Endothelial cell of umbilical vein (primary cell): ENCODE measurements at regions of chr12 and their contacts with region 1.

Region 1: DNA sequence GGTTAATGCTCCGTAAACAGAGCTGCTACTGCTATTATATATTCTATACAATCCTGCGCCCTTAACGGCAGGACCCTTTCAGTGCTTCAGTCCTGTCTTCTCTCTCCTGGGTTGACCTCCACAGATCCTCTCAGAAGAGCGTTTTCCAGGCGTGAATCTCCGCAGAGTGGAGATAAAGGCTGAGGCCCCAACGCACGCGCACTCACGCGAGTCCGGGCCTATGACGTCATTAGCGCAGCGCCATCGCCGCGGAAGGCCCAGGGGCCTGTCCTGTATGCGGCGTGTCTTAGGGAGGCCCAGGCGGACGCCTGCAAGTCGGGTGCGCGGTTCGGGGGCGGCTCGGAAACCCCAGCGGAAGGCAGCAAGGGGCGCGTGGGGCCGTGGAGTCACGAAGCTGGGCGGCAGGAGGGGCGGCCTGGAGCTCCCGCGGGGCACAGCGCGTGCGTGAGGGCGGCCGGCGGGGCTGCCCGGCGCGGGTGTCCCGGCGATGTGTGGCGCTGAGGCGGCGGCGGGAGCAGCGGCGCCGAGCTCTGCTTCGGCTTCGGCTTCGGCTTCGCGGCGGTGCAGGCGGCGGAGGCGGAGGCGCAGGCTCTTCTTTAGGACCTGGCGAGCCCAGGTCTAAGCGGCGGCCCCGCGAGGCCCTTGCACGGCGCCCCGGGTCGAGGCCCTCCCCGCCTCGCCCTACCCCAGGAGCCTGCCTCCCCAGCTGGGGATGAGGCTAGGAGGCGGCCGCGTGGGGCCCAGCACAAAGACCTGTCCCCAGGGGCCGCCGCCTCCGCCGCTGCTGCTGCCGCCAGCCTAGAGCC is at the start of gene MAPKAPK5:
- DNase-seq: peak; percentile 97
- H3K4me3 ChIP-seq: peak within 1 kb of the TSS; percentile 57 to 97 (median 77)
- H3K27ac ChIP-seq: peak within 1 kb of the TSS; percentile 83
- H3K4me1 ChIP-seq: peaks cover 17% of the 10 kb centered on the region
- H3K27me3 ChIP-seq: no peaks in the 10 kb centered on the region
- CTCF ChIP-seq: no peak
- POLR2A ChIP-seq: peak; percentile 97
- total RNA-seq, gene MAPKAPK5: 46.4 and 47.1 TPM in 2 replicates

Region 2: GRCh38 chr12:112012775-112013600 is 171.0 kb after region 1 on chr12 and contains the starts of genes ERP29 and TMEM116:
- CTCF ChIA-PET with region 1: no interaction called
- POLR2A ChIA-PET with region 1: no interaction called
- dilution Hi-C with region 1: no loop called
- intact Hi-C with region 1: loop called (anchors 5 kb)
- DNase-seq: peak; percentile 100
- H3K4me3 ChIP-seq: peak within 1 kb of the TSS; percentile 72 to 81 (median 77)
- H3K27ac ChIP-seq: peak within 1 kb of the TSS; percentile 57
- H3K4me1 ChIP-seq: peaks cover 26% of the 10 kb centered on the region
- H3K27me3 ChIP-seq: no peaks in the 10 kb centered on the region
- CTCF ChIP-seq: peak; percentile 42 to 55
- POLR2A ChIP-seq: peak; percentile 99
- total RNA-seq, gene ERP29: 108 and 116 TPM in 2 replicates
- total RNA-seq, gene TMEM116: 1.6 TPM in 2 replicates

Region 3: GRCh38 chr12:112125250-112125999 is 283.5 kb after region 1 on chr12 and contains the start of gene TRAFD1:
- CTCF ChIA-PET with region 1: no interaction called
- POLR2A ChIA-PET with region 1: no interaction called
- dilution Hi-C with region 1: no loop called
- intact Hi-C with region 1: no loop called
- DNase-seq: peak; percentile 99
- H3K4me3 ChIP-seq: peak within 1 kb of the TSS; percentile 52 to 64 (median 61)
- H3K27ac ChIP-seq: peak within 1 kb of the TSS; percentile 44
- H3K4me1 ChIP-seq: peaks cover 14% of the 10 kb centered on the region
- H3K27me3 ChIP-seq: peaks cover 0 to 2% of the 10 kb centered on the region in 2 experiments
- CTCF ChIP-seq: no peak
- POLR2A ChIP-seq: peak; percentile 98
- total RNA-seq, gene TRAFD1: 22.4 and 24.9 TPM in 2 replicates

Region 4: GRCh38 chr12:112418608-112419298 is 576.8 kb after region 1 on chr12 and contains the start of gene PTPN11:
- CTCF ChIA-PET with region 1: no interaction called
- POLR2A ChIA-PET with region 1: no interaction called
- dilution Hi-C with region 1: no loop called
- intact Hi-C with region 1: loop called (anchors 10 kb)
- DNase-seq: peak; percentile 89
- H3K4me3 ChIP-seq: peak within 1 kb of the TSS; percentile 47 to 98 (median 78)
- H3K27ac ChIP-seq: peak within 1 kb of the TSS; percentile 91
- H3K4me1 ChIP-seq: peaks cover 21% of the 10 kb centered on the region
- H3K27me3 ChIP-seq: peaks cover 0 to 3% of the 10 kb centered on the region in 2 experiments
- CTCF ChIP-seq: peak; percentile 38 to 46
- POLR2A ChIP-seq: peak; percentile 97
- total RNA-seq, gene PTPN11: 104 and 107 TPM in 2 replicates